B cell (primary cell): ENCODE measurements at regions of chr2 and their contacts with region 1.

Region 1: DNA sequence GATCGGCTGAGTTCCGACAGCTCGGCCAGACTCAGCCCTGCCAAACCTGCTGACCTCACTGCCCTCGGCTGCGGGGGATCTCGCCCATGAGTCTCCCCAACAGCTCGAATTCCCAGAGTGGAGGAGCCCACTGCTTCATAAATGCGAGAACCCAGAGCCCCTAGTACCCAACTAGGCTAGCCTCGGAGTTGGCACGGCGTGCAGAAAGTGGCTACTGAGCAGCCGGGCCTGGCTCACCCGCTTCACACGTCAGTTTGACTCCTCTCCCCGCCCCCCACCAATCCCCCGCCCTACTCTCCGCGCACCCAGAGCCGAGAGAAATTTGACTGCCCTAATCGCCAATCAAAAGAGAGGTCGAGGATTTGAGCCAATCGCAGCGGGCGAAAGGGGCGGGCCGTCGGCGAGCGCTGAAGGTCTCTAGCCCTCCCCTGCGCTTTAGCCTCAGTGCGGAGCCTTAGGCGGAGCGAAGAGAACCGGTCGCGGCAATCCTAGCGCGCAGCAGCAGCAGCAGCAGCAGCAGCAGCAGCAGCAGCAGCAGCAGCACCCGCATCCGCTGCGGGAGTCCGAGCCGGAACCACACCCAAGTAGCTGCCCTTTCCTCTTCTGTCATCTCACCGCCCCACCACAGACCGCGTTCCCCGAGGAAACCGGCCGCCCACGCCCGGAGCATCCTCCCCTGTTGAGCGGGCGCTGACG is at the start of gene GLS:
- DNase-seq: peak; percentile 98
- ATAC-seq: peak; percentile 81
- H3K4me3 ChIP-seq: peak within 1 kb of the TSS; percentile 81 to 94 (median 83)
- H3K4me3 Mint-ChIP-seq: peak within 1 kb of the TSS; percentile 99
- H3K27ac ChIP-seq: peak within 1 kb of the TSS; percentile 84 to 87
- H3K27ac Mint-ChIP-seq: peak within 1 kb of the TSS; percentile 99
- H3K4me1 ChIP-seq: peaks cover 38 to 40% of the 10 kb centered on the region in 2 donors
- H3K4me1 Mint-ChIP-seq: peaks cover 43% of the 10 kb centered on the region
- H3K27me3 ChIP-seq: no peaks in the 10 kb centered on the region
- H3K27me3 Mint-ChIP-seq: no peaks in the 10 kb centered on the region
- CTCF ChIP-seq: no peak
- total RNA-seq, gene GLS: 194 and 195 TPM in 2 replicates

Region 2: GRCh38 chr2:189783927-189784867 is 1096.3 kb before region 1 on chr2 and contains the starts of genes ORMDL1 and PMS1:
- CTCF ChIA-PET with region 1: no interaction called
- POLR2A ChIA-PET with region 1: no interaction called
- intact Hi-C with region 1: loop called (anchors 10 kb)
- DNase-seq: peak; percentile 98
- ATAC-seq: peak; percentile 90
- H3K4me3 ChIP-seq: peak within 1 kb of the TSS; percentile 66 to 96 (median 79)
- H3K4me3 Mint-ChIP-seq: peak within 1 kb of the TSS; percentile 96
- H3K27ac ChIP-seq: peak within 1 kb of the TSS; percentile 83 to 84
- H3K27ac Mint-ChIP-seq: peak within 1 kb of the TSS; percentile 98
- H3K4me1 ChIP-seq: peaks cover 14 to 21% of the 10 kb centered on the region in 2 donors
- H3K4me1 Mint-ChIP-seq: peaks cover 42% of the 10 kb centered on the region
- H3K27me3 ChIP-seq: no peaks in the 10 kb centered on the region
- H3K27me3 Mint-ChIP-seq: no peaks in the 10 kb centered on the region
- CTCF ChIP-seq: no peak
- total RNA-seq, gene ORMDL1: 166 and 170 TPM in 2 replicates
- total RNA-seq, gene PMS1: 43.6 and 44.2 TPM in 2 replicates

Region 3: DNA sequence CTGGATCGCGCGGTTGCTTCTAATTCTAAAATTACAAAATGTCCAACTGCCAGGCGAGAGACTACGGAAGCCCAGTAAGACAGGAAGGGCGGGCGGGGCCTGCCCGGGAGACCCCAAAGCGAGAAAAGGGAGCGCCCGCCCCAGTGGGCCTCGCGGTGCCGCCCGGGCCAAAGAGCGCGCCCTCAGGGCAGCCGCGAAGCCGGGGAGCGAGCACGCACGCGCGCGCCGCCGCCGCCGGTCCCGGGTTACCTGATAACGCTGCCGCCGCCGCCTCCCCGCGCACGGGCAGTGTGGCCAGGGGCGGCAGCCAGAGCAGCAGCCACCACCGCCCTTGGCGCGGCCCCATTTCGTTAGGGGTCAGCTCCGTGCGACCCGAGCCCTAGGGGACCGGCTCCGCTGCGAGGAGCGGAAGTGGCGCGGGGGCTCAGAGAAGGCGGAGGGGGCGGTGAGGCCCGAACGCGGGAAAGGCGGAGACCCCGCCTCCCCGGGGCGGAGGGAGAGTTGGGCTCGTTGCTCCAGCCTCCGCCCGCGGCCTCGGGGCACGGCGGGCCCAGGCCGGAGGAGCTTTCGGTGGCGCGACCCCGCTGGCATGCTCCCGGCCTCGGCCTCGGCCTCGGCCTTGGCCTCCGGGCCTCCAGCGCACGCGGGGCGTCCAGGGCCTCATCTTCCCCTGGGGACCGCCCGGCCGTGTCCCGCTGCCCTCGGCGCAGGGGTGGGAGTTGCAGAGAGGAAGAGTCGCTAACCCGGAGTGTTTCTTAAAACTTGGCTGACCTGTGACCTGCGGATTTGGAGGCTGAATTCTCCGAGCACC is 346.0 kb before region 1 on chr2 and contains the start of gene NEMP2:
- CTCF ChIA-PET with region 1: no interaction called
- POLR2A ChIA-PET with region 1: interaction called, 5 read pairs
- intact Hi-C with region 1: loop called (anchors 1 kb)
- DNase-seq: peak; percentile 90
- ATAC-seq: peak; percentile 78
- H3K4me3 ChIP-seq: peak within 1 kb of the TSS; percentile 80 to 92 (median 83)
- H3K4me3 Mint-ChIP-seq: peak within 1 kb of the TSS; percentile 97
- H3K27ac ChIP-seq: peak within 1 kb of the TSS; percentile 94 to 95
- H3K27ac Mint-ChIP-seq: peak within 1 kb of the TSS; percentile 100
- H3K4me1 ChIP-seq: peaks cover 27 to 33% of the 10 kb centered on the region in 2 donors
- H3K4me1 Mint-ChIP-seq: peaks cover 55% of the 10 kb centered on the region
- H3K27me3 ChIP-seq: no peaks in the 10 kb centered on the region
- H3K27me3 Mint-ChIP-seq: no peaks in the 10 kb centered on the region
- CTCF ChIP-seq: no peak
- total RNA-seq, gene NEMP2: 17.3 and 22.4 TPM in 2 replicates

Region 4: GRCh38 chr2:190927301-190927700 is 46.8 kb after region 1 on chr2:
- CTCF ChIA-PET with region 1: no interaction called
- POLR2A ChIA-PET with region 1: no interaction called
- intact Hi-C with region 1: loop called (anchors 5 kb)
- DNase-seq: no peak
- ATAC-seq: no peak
- H3K4me3 ChIP-seq: no peak overlapping the region
- H3K4me3 Mint-ChIP-seq: no peak overlapping the region
- H3K27ac ChIP-seq: no peak overlapping the region
- H3K27ac Mint-ChIP-seq: no peak overlapping the region
- H3K4me1 ChIP-seq: no peaks in the 10 kb centered on the region
- H3K4me1 Mint-ChIP-seq: no peaks in the 10 kb centered on the region
- H3K27me3 ChIP-seq: no peaks in the 10 kb centered on the region
- H3K27me3 Mint-ChIP-seq: no peaks in the 10 kb centered on the region
- CTCF ChIP-seq: no peak

Region 5: GRCh38 chr2:191150600-191151330 is 270.2 kb after region 1 on chr2 and contains the start of gene STAT4:
- CTCF ChIA-PET with region 1: no interaction called
- POLR2A ChIA-PET with region 1: no interaction called
- intact Hi-C with region 1: loop called (anchors 2 kb)
- DNase-seq: peak; percentile 88
- ATAC-seq: peak; percentile 91
- H3K4me3 ChIP-seq: peak within 1 kb of the TSS; percentile 52 to 97 (median 72)
- H3K4me3 Mint-ChIP-seq: peak within 1 kb of the TSS; percentile 94
- H3K27ac ChIP-seq: peak within 1 kb of the TSS; percentile 38 to 53
- H3K27ac Mint-ChIP-seq: peak within 1 kb of the TSS; percentile 85
- H3K4me1 ChIP-seq: peaks cover 3 to 16% of the 10 kb centered on the region in 2 donors
- H3K4me1 Mint-ChIP-seq: peaks cover 30% of the 10 kb centered on the region
- H3K27me3 ChIP-seq: no peaks in the 10 kb centered on the region
- H3K27me3 Mint-ChIP-seq: peaks cover 13% of the 10 kb centered on the region
- CTCF ChIP-seq: no peak
- total RNA-seq, gene STAT4: 58.9 and 62.1 TPM in 2 replicates